Ovary (tissue), 10 donors: ENCODE measurements at regions of chr18 and their contacts with region 1.

Region 1: GRCh38 chr18:12819322-12819721 is 64.7 kb downstream of the PTPN2 start:
- DNase-seq: no peak
- H3K4me3 ChIP-seq: no peak overlapping the region
- H3K27ac ChIP-seq: peak overlapping the region in 1 of 2 donors; percentile 34
- H3K4me1 ChIP-seq: peaks cover 3% of the 10 kb centered on the region
- H3K27me3 ChIP-seq: no peaks in the 10 kb centered on the region
- CTCF ChIP-seq: no peak
- EP300 ChIP-seq: no peak
- POLR2A ChIP-seq: no peak

Region 2: DNA sequence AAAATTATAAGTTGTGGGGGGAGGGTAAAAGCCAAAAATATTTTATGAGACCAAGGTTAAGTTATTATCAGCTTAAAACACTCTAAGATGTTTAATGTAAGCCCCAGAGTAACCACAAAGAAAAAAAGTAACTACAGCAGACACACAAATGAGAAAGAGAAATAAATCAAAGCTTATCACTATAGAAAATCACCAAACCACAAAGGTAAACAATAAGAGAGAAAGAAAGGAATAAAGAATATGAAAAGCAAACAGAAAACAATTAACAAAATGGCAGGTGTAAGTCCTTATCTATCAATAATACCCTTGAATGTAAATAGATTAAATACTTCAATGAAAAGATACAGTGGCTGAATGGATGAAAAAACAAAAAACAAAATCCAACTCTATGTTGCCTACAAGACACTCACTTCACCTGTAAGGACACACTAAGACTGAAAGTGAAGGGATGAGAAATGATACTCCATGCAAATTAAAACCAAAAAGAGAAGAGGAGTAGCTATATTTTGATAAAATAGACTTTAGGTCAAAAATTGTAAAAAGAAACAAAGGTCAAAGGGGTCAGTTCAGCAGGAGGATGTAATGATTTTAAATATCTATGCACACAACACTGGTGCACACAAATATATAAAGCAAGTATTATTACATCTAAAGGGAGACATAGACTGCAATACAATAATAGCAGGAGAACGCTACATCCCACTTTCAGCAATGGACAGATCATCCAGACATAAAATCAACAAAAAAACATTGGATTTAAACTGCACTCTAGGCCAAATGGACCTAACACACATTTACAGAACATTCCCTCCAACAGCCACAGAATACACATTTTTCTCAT is 16.0 kb before region 1 on chr18:
- intact Hi-C with region 1: loop called in 2 of 4 experiments (anchors 1 to 2 kb)
- DNase-seq: no peak
- H3K4me3 ChIP-seq: no peak overlapping the region
- H3K27ac ChIP-seq: no peak overlapping the region
- H3K4me1 ChIP-seq: no peaks in the 10 kb centered on the region
- H3K27me3 ChIP-seq: no peaks in the 10 kb centered on the region
- CTCF ChIP-seq: no peak
- EP300 ChIP-seq: no peak
- POLR2A ChIP-seq: no peak